Dendritic cell treated with granulocyte-macrophage colony-stimulating factor and Interleukin-4, amounts not matched to agents 40 ng/mL and 50 ng/mL, for 4 days (primary cell): ENCODE measurements at regions of chr4 and their contacts with region 1.

Region 1: GRCh38 chr4:14168919-14169318 is 541.4 kb upstream of the BOD1L1 start:
- H3K4me3 Mint-ChIP-seq: no peak overlapping the region
- H3K27ac Mint-ChIP-seq: no peak overlapping the region
- H3K4me1 Mint-ChIP-seq: peaks cover 63% of the 10 kb centered on the region
- H3K27me3 Mint-ChIP-seq: peaks cover 2% of the 10 kb centered on the region

Region 2: GRCh38 chr4:14111730-14112181 is 57.2 kb before region 1 on chr4:
- intact Hi-C with region 1: loop called (anchors 10 kb)
- H3K4me3 Mint-ChIP-seq: peak overlapping the region; percentile 54
- H3K27ac Mint-ChIP-seq: peak overlapping the region; percentile 42
- H3K4me1 Mint-ChIP-seq: peaks cover 17% of the 10 kb centered on the region
- H3K27me3 Mint-ChIP-seq: peaks cover 1% of the 10 kb centered on the region

Region 3: DNA sequence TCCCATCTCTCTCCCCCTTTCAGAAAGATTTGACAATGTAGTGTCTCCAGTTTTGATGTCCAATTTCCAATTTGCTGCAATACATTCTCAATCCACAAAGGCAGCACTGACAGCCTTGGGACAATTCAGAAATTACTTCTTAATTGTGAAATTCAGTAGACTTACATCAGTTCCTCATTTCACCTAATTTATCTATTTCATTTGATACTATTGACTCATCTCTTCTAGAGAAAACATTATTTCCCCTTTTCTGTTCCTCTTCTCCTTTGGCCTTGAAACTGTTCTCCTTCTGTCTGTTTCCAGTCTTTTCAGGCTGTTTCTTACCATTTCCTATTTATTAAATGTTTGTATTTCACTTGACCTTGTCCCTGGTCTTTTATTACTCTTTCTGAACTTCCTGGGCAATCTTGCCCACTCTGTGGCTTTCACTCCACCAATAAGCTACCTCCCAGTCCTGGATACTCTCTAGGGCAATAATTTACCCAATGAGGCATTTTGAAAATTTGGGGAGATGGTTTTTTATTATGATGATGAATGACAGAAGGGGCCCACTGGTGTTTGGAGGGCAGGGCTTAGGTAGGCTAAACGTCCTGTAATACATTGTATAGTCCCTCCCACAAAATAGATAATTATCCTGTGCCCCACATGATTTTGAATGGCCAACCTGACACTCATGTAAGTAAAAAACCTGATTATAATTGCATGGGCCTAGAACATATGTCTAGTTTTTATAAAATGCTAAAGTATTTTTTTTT is 43.4 kb before region 1 on chr4:
- intact Hi-C with region 1: loop called (anchors 5 kb)
- H3K4me3 Mint-ChIP-seq: no peak overlapping the region
- H3K27ac Mint-ChIP-seq: peak overlapping the region; percentile 61
- H3K4me1 Mint-ChIP-seq: peaks cover 58% of the 10 kb centered on the region
- H3K27me3 Mint-ChIP-seq: no peaks in the 10 kb centered on the region